AG04449 (cell line): ENCODE measurements at regions of chr7 and their contacts with region 1.

Region 1: GRCh38 chr7:116588641-116589594 is 64.1 kb downstream of the CAV1 start:
- DNase-seq: no peak
- H3K4me3 ChIP-seq: no peak overlapping the region
- CTCF ChIP-seq: peak; percentile 16

Region 2: GRCh38 chr7:116180302-116180701 is 408.6 kb before region 1 on chr7:
- CTCF ChIA-PET with region 1: interaction called, 71 read pairs
- POLR2A ChIA-PET with region 1: no interaction called
- DNase-seq: no peak
- H3K4me3 ChIP-seq: no peak overlapping the region
- CTCF ChIP-seq: peak; percentile 66

Region 3: GRCh38 chr7:116258734-116259133 is 330.2 kb before region 1 on chr7:
- CTCF ChIA-PET with region 1: interaction called, 161 read pairs
- POLR2A ChIA-PET with region 1: interaction called, 7 read pairs
- DNase-seq: no peak
- H3K4me3 ChIP-seq: no peak overlapping the region
- CTCF ChIP-seq: peak; percentile 31

Region 4: DNA sequence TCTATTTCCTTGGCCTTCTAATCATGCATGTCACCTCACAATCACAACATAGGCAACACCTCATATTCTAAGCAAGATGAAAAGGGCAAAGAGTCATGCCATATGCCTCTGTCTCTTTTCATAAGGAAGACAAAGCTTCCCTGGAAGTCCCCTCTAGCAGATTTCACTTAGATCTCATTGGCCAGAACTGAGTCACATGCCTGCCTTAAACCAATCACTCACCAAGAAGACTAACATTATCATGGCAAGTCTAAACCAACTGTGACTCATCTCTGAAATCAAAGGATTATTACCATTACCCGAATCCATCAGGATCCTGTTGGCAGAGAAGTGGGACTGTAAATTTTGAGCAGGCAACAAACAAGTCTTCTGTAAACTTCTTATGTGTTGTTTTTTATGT is 36.3 kb before region 1 on chr7:
- CTCF ChIA-PET with region 1: interaction called, 11 read pairs
- POLR2A ChIA-PET with region 1: interaction called, 3 read pairs
- DNase-seq: no peak
- H3K4me3 ChIP-seq: no peak overlapping the region
- CTCF ChIP-seq: no peak

Region 5: DNA sequence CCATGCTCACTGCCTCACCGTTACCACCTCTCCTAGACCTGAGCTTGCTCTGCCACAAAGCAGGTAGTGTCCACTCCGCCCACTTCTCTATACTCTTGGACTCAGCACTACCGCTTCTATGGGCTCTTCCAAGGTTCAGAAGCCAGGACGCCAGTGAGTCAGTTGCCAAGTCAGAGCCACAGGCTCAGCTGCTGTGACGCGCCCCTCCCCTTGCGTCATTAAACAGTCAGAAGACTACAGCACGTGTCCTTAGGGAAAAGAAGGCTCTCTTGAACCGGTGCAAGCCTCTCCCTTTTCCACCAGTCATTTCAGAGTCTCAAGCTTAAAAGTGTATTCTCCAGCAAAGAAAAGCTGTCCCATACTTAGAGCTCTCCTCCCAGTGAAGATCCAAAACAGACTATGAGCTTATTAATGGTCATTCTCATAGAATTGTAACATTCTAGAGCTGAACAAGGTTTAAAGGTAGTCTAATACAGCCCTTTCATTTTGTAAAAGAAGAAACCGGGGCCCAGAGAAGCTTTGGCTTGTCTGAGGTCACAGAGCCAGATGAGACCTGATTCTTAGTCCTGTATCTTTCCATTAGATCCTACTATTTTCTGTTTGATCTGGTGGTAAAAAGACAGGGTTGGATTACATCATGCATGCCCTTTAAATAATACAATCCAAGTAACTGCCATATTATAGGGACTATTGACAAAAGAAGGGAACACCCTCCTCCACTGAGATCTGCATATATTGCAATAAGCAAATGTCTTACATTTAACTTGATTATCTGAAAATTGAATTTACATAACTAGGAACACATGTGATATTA is 42.2 kb after region 1 on chr7:
- CTCF ChIA-PET with region 1: interaction called, 11 read pairs
- POLR2A ChIA-PET with region 1: no interaction called
- DNase-seq: peak; percentile 28
- H3K4me3 ChIP-seq: no peak overlapping the region
- CTCF ChIP-seq: no peak

Region 6: DNA sequence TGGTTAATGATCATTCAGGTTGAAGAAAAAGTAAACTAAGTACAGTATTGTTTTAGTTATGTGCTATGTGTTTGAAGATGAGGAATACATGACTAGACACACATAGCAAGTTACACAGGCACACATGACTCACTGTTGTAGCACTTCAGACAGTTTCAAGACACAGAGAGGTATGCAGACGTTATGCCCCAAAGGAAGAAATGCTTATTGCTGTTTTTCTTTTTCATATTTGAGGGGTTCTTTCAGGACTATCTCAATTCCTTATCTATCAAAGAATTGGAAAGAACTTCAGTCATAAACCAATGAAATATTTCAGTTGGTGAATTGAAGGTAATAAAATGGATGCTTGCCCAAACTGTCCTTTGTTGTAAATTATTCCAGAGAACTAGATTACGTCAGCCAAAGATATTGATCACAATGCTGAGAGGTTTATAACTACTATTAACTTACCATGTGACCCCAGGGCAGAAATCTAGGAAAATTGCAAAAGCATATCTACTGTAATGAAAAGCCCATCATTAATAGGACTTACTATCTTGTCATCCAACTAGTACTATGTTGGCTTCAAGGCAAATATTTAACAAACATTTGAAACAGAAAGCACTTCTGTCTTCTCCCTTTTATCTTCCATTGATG is 212.3 kb after region 1 on chr7:
- CTCF ChIA-PET with region 1: interaction called, 353 read pairs
- POLR2A ChIA-PET with region 1: no interaction called
- DNase-seq: peak; percentile 77
- H3K4me3 ChIP-seq: no peak overlapping the region
- CTCF ChIP-seq: no peak

Region 7: DNA sequence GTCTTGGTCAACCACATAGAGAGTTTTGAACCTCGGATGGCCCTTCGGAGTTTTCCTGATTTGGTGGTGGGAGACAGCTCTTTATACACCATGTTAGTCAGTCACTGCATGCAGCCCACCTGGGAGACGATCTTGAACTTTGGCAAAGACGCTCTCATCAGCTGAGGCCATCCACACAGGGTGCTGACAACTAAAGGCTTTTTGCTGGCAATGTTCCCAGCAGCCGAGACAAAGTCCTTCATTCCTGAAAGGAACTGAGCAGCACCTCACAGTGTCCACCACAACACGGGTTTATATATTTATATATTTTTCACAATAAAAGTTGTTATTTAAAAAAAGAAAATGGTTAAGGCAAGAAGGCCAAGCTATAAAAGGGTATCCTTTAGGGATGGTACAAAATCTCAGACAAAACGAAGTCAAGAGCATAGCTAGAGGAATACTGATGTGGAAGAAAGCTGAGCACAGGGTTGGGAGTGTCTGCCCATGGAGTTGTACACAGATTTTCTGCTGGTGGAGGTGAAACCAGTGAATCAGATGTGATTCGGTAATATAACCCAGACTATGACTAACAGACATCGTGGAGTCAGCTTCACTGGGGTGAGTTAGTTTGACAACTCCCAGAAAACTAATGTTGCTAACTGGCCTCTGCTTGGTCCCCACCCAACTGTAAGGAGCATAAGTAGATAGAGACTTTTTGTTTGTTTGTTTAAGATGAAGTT is 246.1 kb after region 1 on chr7:
- CTCF ChIA-PET with region 1: interaction called, 14 read pairs
- POLR2A ChIA-PET with region 1: no interaction called
- DNase-seq: no peak
- H3K4me3 ChIP-seq: no peak overlapping the region
- CTCF ChIP-seq: no peak